Endothelial cell of umbilical vein (primary cell): ENCODE measurements at regions of chr11 and their contacts with region 1.

Region 1: GRCh38 chr11:74683279-74683871 is 47.9 kb downstream of the CHRDL2 start:
- DNase-seq: peak; percentile 41
- H3K4me3 ChIP-seq: peak overlapping the region; percentile 27 to 31 (median 29)
- H3K27ac ChIP-seq: no peak overlapping the region
- H3K4me1 ChIP-seq: peaks cover 4% of the 10 kb centered on the region
- H3K27me3 ChIP-seq: no peaks in the 10 kb centered on the region
- CTCF ChIP-seq: peak; percentile 38 to 70
- POLR2A ChIP-seq: no peak

Region 2: DNA sequence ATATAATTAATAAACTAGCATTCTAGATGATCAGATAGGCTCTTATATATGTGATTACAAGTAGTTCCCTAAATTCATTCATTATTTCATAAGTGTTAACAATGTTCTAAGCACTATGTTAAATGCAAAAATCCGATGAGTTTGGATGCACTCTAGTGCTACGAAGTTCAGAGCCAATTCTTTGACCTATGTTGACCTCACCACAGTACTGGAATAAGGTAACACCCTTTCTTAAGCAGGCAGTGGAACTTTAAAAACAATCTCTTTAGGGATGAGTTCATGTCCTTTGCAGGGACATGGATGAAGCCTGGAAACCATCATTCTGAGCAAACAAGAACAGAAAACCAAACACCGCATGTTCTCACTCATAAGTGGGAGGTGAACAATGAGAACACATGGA is 606.2 kb before region 1 on chr11:
- CTCF ChIA-PET with region 1: no interaction called
- POLR2A ChIA-PET with region 1: no interaction called
- dilution Hi-C with region 1: no loop called
- intact Hi-C with region 1: no loop called
- DNase-seq: no peak
- H3K4me3 ChIP-seq: no peak overlapping the region
- H3K27ac ChIP-seq: no peak overlapping the region
- H3K4me1 ChIP-seq: no peaks in the 10 kb centered on the region
- H3K27me3 ChIP-seq: no peaks in the 10 kb centered on the region
- CTCF ChIP-seq: no peak
- POLR2A ChIP-seq: no peak

Region 3: DNA sequence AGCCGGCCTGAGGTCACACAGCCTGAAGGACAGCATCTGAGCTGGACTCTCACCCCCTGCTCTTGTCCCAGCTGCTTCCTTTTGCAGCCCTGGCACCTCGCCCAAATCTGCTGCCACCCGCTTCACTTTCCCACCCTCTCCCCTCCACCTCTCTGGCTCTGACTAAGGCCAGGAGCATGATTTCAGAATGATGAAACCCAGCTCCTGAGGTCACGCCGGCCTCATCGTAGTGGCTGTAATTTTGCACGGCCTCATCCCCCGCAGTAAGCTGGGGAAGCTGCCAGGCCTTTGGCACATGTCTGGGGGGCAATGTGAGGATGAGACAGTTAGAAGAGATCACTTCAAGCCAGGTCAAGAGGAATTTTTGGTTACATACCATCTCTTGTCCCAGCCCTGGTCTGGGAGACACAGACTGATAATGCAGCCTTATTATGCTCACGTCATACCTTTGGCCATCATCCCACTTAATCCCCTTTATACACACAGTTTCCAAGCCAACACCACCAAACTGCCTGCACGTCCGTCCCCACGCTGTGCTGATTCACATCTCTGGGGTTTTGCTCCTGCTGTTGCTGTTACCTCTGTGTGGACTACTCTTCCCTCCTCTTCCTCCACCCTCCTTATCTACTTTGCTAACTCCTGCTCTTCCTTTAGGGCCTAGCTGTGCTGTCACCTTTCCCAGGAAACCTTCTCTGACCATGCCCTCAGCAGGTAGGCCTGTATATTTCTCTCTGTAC is 10.3 kb before region 1 on chr11:
- CTCF ChIA-PET with region 1: interaction called, 15 read pairs
- POLR2A ChIA-PET with region 1: no interaction called
- dilution Hi-C with region 1: no loop called
- intact Hi-C with region 1: no loop called
- DNase-seq: peak; percentile 15
- H3K4me3 ChIP-seq: no peak overlapping the region
- H3K27ac ChIP-seq: no peak overlapping the region
- H3K4me1 ChIP-seq: no peaks in the 10 kb centered on the region
- H3K27me3 ChIP-seq: no peaks in the 10 kb centered on the region
- CTCF ChIP-seq: no peak
- POLR2A ChIP-seq: no peak

Region 4: DNA sequence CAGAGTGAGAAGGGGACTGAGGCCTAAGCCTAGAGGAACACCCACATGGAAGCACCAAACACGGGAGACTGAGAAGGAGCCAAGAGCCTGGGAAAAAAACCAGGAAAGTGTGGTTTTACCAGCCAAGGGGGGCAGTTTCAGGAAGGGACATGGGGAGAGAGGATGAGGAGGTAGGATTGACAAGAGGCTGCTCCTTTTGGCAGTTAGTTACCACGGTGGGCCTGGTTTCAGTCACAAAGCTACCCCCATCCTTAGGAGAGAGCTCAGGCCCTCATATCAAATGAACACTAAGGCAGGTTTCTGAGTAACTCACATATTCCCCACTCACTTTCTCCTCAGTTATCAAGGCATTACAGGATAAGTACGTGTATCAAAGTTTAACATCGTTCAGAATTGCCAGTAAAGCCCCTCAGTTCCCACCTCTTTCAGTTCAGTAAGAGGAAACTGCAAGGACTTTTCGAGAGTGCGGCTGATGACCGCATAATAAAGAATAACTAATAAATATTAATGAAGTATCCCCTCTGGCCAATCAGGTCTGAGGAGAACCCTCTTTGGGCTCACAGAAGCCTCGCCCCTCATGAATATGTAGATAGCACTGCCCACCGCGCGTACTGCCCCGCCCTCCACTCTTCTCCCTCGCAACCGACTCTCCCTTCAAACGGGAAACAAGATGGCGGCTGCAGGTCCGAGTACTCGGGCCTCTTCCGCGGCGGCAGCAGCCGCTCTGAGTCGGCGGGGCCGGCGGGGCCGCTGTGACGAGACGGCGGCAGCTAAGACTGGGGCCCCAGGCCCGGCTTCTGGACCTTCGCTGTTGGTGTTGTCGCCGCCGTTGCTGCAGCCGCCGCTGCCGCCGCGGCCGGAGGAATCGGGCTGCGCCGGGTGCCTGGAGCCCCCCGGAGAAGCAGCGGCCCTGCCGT is 65.1 kb after region 1 on chr11 and contains the start of gene RNF169:
- CTCF ChIA-PET with region 1: no interaction called
- POLR2A ChIA-PET with region 1: no interaction called
- dilution Hi-C with region 1: no loop called
- intact Hi-C with region 1: no loop called
- DNase-seq: peak; percentile 98
- H3K4me3 ChIP-seq: peak within 1 kb of the TSS; percentile 49 to 84 (median 70)
- H3K27ac ChIP-seq: peak within 1 kb of the TSS; percentile 88
- H3K4me1 ChIP-seq: peaks cover 22% of the 10 kb centered on the region
- H3K27me3 ChIP-seq: peaks cover 0 to 2% of the 10 kb centered on the region in 2 experiments
- CTCF ChIP-seq: no peak
- POLR2A ChIP-seq: peak; percentile 90
- total RNA-seq, gene RNF169: 17.3 and 21.3 TPM in 2 replicates

Region 5: DNA sequence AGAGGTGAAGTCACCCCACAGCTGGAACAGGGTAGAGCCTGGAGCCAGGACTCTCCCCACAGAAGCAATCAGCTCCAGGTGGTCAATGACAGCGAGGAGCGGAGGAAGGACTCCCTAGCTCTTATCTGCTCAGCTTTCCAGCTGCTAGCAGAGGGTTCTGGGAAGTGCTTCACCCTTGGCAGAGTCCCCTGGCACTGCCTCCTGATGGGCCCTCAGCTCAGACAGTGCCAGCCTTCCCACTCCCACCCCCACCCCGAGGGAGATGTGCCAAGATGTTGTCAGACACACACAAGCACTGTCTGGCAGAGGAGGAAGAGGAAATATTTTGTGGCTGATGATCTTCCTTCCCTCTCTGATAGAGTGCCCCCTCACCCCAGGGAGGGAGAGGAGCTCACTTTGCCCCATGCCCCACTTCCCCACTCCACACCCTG is 511.8 kb after region 1 on chr11:
- CTCF ChIA-PET with region 1: no interaction called
- POLR2A ChIA-PET with region 1: no interaction called
- dilution Hi-C with region 1: no loop called
- intact Hi-C with region 1: no loop called
- DNase-seq: peak; percentile 10
- H3K4me3 ChIP-seq: no peak overlapping the region
- H3K27ac ChIP-seq: no peak overlapping the region
- H3K4me1 ChIP-seq: peaks cover 4% of the 10 kb centered on the region
- H3K27me3 ChIP-seq: peaks cover 0 to 2% of the 10 kb centered on the region in 2 experiments
- CTCF ChIP-seq: no peak
- POLR2A ChIP-seq: no peak